ENCODE measurements at regions of chr6 and their contacts with region 1.

Region 1: GRCh38 chr6:146700078-146700686 is 101.4 kb downstream of the ADGB start:
- DNase-seq: peak; percentile 55 to 79
- ATAC-seq: peak; percentile 87

Region 2: DNA sequence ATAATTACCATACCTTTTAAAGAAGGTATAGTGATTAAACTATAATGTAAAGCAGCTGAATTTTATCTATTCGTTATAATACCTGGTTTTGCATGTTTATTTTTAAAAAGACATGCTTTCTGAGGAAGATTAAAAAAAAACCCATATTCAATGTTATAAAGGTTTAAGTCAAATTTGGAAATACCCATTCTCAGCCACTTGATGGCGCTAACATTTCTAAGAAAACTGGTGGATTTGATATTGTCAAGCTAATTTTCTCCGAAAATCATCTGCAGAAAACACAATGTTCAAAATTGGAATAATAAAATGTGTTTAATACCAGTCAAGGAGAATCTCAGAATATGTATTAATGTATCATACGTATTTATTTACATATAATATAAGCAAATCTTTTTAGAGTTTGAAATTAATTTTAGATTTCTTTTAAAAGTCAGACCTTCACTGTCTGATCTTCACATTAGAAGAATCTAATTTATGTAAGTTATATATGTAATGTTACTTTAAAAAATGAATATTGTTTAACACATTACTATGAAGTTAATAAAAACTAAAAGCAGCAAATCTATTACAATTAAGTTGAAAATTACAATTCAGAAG is 771.0 kb before region 1 on chr6:
- intact Hi-C with region 1: loop called in 1 of 2 experiments (anchors 5 kb)
- DNase-seq: no peak
- ATAC-seq: no peak

Region 3: DNA sequence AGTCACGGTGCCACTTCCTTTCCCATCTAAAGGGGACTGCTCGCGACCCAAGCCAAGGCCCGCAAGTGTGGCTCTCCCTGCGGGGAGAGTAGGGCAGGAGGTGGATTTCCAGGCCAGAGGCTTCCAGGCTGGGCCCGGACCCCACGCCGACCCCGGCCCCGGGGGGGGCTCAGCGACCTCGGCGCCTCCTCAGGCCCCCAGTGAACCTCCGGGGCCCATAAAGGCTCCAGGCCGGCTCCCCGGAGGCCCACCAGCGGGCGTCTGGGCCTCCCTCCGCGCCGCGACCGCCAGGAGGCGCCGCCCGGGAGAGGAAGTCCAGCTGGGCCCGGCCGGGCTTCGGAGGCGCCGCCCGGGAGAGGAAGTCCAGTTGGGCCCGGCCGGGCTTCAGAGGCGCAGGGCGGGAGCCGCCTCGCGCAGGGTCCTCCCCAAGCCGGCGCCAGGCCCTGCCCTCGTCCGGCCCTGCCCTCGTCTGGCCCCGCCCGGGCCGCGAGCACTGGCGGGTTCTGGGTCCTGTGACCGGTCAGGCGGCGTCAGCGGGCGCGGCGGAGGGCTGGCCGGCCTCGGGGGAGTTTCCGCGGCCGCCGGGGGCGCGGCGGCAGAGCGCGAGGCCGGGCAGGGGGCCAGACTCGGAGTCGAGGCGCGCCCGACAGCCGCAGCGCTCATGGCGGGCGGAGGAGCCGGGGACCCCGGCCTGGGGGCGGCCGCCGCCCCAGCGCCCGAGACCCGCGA is 156.8 kb before region 1 on chr6 and contains the start of gene RAB32:
- intact Hi-C with region 1: loop called in 1 of 2 experiments (anchors 10 kb)
- DNase-seq: peak; percentile 93 to 94
- ATAC-seq: peak; percentile 94
- total RNA-seq, gene RAB32: 42.6 to 48.9 TPM

Measured in left colon (tissue), 2 donors.